Activated CD4-positive, alpha-beta T cell treated with anti-CD3 and anti-CD28 coated beads for 36 hours (primary cell): ENCODE measurements at regions of chr10 and their contacts with region 1.

Region 1: GRCh38 chr10:63268798-63269503 is 135.8 kb downstream of the NRBF2 start:
- DNase-seq: peak; percentile 86
- ATAC-seq: peak; percentile 91
- H3K4me3 Mint-ChIP-seq: peak overlapping the region; percentile 94
- H3K27ac Mint-ChIP-seq: peak overlapping the region; percentile 99
- H3K4me1 Mint-ChIP-seq: peaks cover 21% of the 10 kb centered on the region
- H3K27me3 Mint-ChIP-seq: no peaks in the 10 kb centered on the region

Region 2: DNA sequence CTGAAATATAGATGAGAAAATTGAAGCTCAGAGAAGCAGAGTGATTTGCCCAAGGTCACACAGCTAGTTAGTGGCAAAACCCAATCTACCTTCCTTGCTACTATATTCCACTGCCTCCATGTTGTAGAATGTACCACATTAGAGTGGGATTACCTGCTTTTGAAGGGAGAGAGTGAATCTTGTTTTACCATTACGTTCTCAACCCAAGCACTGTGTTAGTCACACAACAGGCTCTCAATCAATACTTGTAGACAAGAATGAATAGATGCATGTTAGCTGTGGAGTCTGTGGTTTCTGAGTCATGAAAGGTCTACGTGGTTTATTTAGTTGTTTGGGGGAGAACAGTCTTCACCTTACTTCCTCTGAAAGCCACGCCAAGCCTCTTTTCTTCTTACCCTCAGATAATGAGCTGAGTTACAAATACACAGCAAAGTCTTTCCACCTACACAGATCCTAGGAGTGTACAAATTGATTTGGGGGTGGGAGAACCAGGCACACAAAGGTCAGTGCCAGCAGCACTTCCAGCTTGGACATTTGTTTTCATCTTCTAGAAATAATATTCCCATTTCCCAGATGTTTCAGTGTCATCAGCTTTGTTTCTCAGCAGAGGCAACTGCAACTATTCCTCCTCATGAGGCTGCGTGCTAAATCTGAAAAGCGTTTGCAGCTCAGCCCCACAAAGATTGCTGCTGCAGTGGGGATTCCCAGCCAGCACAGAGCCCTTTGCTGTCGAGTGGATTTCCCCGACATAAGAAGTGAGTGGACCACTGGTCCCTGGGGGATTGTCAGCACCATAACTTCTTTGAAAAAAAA is 535.9 kb before region 1 on chr10:
- CTCF ChIA-PET with region 1: no interaction called
- POLR2A ChIA-PET with region 1: no interaction called
- intact Hi-C with region 1: loop called (anchors 5 to 10 kb)
- DNase-seq: peak; percentile 79
- ATAC-seq: peak; percentile 87
- H3K4me3 Mint-ChIP-seq: peak overlapping the region; percentile 3
- H3K27ac Mint-ChIP-seq: no peak overlapping the region
- H3K4me1 Mint-ChIP-seq: peaks cover 25% of the 10 kb centered on the region
- H3K27me3 Mint-ChIP-seq: peaks cover 5% of the 10 kb centered on the region

Region 3: GRCh38 chr10:63133056-63133820 is 135.7 kb before region 1 on chr10 and contains the start of gene NRBF2:
- CTCF ChIA-PET with region 1: no interaction called
- POLR2A ChIA-PET with region 1: no interaction called
- intact Hi-C with region 1: loop called in 1 of 2 experiments (anchors 5 kb)
- DNase-seq: peak; percentile 99
- ATAC-seq: peak; percentile 90
- H3K4me3 Mint-ChIP-seq: peak within 1 kb of the TSS; percentile 81
- H3K27ac Mint-ChIP-seq: peak within 1 kb of the TSS; percentile 92
- H3K4me1 Mint-ChIP-seq: peaks cover 46% of the 10 kb centered on the region
- H3K27me3 Mint-ChIP-seq: no peaks in the 10 kb centered on the region
- total RNA-seq, gene NRBF2: 23.9 to 24.1 TPM

Region 4: GRCh38 chr10:63217120-63217605 is 51.8 kb before region 1 on chr10:
- CTCF ChIA-PET with region 1: interaction called, 11 read pairs
- POLR2A ChIA-PET with region 1: interaction called, 3 read pairs
- intact Hi-C with region 1: loop called (anchors 2 kb)
- DNase-seq: no peak
- ATAC-seq: peak; percentile 90
- H3K4me3 Mint-ChIP-seq: no peak overlapping the region
- H3K27ac Mint-ChIP-seq: peak overlapping the region; percentile 19
- H3K4me1 Mint-ChIP-seq: peaks cover 55% of the 10 kb centered on the region
- H3K27me3 Mint-ChIP-seq: no peaks in the 10 kb centered on the region

Region 5: GRCh38 chr10:63355682-63356081 is 86.7 kb after region 1 on chr10:
- CTCF ChIA-PET with region 1: no interaction called
- POLR2A ChIA-PET with region 1: no interaction called
- intact Hi-C with region 1: loop called (anchors 1 to 2 kb)
- DNase-seq: no peak
- ATAC-seq: no peak
- H3K4me3 Mint-ChIP-seq: no peak overlapping the region
- H3K27ac Mint-ChIP-seq: peak overlapping the region; percentile 40
- H3K4me1 Mint-ChIP-seq: peaks cover 34% of the 10 kb centered on the region
- H3K27me3 Mint-ChIP-seq: no peaks in the 10 kb centered on the region

Region 6: GRCh38 chr10:63629363-63630084 is 360.6 kb after region 1 on chr10:
- CTCF ChIA-PET with region 1: interaction called, 17 read pairs
- POLR2A ChIA-PET with region 1: interaction called, 7 read pairs
- intact Hi-C with region 1: loop called (anchors 1 to 2 kb)
- DNase-seq: peak; percentile 92
- ATAC-seq: peak; percentile 72
- H3K4me3 Mint-ChIP-seq: peak overlapping the region; percentile 80
- H3K27ac Mint-ChIP-seq: peak overlapping the region; percentile 86
- H3K4me1 Mint-ChIP-seq: peaks cover 25% of the 10 kb centered on the region
- H3K27me3 Mint-ChIP-seq: no peaks in the 10 kb centered on the region